ENCODE measurements at regions of chr15 and their contacts with region 1.

Region 1: DNA sequence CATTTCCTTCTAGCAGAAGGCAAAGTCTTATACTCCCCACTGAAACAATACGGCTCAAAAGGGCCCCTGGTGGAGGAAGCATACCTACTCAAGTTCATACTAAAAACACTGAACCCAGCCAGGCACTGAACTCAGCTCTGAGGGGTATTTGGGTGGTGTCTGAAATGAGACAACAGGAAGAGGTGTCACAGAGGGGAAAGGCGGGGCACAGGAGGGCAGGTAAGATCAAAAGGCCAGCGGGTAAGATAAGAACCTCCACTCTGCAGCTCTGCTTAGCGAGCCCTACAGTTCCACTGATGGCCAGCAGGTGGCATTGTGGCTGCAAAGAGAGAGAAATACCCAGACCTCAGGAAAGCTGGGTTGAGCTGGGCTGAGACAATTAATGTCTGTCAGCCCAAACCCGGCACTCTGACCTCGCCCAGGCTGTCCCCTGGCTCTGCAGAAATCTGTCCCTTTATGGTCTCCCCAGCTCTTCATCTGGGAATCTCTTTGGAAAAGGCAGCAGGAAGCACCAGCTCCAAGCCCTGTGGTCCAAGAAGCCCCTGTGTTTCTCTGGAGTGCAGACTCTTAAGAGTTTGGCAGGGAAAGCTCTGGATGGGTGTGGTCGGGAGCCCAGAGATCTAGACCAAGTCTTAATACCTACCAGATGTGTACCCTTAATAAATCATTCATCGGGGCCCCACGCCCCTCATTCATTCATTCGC is 8.4 kb downstream of the MFGE8 start:
- DNase-seq: peak; percentile 86
- ATAC-seq: peak; percentile 81

Region 2: GRCh38 chr15:88805031-88805782 is 99.6 kb before region 1 on chr15:
- intact Hi-C with region 1: no loop called
- DNase-seq: no peak
- ATAC-seq: no peak

Region 3: DNA sequence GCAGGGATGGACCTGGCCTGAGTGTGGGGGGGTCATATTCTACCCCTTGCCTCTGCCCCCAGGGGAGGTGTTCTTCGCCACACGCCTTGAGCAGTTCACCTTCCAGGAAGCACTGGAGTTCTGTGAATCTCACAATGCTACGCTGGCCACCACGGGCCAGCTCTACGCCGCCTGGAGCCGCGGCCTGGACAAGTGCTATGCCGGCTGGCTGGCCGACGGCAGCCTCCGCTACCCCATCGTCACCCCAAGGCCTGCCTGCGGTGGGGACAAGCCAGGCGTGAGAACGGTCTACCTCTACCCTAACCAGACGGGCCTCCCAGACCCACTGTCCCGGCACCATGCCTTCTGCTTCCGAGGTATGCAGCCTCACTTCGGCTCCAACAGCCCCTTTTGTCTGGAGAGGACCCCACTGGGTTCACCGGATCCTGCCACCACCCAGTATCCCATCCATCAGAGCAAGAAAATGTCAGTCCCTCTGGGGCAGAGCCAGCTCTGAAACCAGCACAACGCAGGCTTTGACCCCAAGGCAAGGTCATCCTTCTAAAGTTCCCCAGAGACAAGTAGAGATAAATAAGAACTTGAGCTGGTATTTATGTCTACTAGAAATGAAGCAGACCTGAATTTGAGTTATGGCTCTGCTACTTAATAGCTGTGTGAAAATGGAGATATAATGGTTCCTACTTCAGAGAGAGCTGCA is 55.3 kb before region 1 on chr15:
- intact Hi-C with region 1: no loop called
- DNase-seq: no peak
- ATAC-seq: peak; percentile 20

Region 4: DNA sequence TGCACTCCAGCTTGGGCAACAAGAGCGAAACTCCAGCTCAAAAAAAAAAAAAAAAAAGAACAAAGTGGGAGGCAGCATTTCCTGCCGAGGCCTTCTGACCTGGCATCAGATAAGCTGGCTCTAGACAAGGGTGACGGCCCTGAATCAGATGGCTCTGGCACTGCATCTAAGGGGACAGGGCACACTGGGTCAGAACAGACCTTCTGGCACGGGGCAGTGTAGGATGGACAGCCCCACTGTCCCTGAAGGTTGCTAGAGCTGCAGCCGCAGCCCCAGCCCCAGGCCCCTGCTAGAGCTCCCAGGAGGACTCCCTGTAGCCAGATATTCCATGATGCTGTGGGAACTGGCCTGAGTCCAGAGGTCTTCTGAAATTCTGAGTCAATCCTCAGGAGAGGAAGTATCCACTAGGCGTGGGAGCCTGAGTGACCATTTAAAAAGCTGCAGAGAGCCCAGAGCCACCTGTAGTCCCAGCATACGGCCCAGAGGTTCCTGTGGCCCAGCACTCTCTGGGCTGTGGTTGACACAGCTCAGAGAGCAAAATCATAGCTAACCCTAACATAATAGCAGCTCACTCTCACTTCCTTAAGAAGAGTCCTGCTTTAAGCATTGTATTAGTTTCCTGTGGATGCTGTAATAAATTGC is 77.6 kb after region 1 on chr15:
- intact Hi-C with region 1: no loop called
- DNase-seq: peak; percentile 84
- ATAC-seq: peak; percentile 89

Region 5: GRCh38 chr15:89003865-89004725 is 99.3 kb after region 1 on chr15:
- intact Hi-C with region 1: loop called (anchors 1 kb)
- DNase-seq: no peak
- ATAC-seq: peak; percentile 84

Measured in Right ventricle myocardium inferior (tissue), 1 donor.